Right lobe of liver (tissue), 6 donors: ENCODE measurements at regions of chr6 and their contacts with region 1.

Region 1: DNA sequence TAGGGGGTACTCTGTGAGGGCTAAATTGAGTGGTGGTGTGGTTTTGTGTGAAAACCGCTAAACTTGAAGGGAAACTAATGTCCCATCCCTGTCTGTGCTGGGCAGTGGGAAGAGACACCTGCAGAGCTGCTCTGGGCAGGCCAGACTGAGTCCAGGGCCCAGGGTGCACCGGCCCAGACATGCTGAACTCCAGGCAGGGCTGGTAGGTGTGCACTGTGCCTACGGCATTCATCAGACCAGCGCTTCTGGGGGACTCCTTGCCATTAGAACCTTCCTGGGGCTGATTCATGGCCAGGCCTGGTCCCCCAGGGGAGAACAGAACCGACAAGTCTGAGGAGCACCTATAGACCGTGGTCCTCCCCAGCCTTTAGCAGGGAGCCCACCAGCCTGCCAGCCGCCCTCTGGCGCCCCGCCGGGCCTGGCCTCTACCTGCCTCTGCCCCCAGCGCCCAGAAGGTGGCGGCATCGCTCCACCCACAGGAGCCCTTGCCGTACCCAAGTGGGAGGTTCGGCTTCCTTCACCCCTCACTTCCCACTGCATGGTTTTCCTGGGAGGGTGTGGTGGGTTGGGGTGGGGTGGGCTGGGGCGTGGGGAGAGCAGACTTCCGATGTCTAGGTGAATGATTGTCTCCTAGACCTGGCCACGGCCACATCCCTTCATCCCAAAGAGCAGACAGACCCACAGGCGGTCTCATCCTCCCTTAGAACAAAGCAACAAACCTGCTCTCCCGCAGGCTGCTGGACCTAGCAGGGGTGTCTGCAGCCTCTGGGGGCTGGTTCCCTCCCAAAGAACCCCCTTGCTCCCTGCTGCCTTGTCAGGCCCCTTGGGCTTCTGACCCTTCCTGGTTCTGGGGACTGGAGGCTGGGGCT is 15.5 kb downstream of the CCDC167 start:
- DNase-seq: peak; percentile 63 to 72 (median 67)
- ATAC-seq: peak; percentile 80 to 89 (median 85)
- H3K4me3 ChIP-seq: no peak overlapping the region
- H3K27ac ChIP-seq: no peak overlapping the region
- H3K4me1 ChIP-seq: no peaks in the 10 kb centered on the region
- H3K27me3 ChIP-seq: no peaks in the 10 kb centered on the region
- CTCF ChIP-seq: peak; percentile 69 to 85 (median 77)
- POLR2A ChIP-seq: no peak

Region 2: DNA sequence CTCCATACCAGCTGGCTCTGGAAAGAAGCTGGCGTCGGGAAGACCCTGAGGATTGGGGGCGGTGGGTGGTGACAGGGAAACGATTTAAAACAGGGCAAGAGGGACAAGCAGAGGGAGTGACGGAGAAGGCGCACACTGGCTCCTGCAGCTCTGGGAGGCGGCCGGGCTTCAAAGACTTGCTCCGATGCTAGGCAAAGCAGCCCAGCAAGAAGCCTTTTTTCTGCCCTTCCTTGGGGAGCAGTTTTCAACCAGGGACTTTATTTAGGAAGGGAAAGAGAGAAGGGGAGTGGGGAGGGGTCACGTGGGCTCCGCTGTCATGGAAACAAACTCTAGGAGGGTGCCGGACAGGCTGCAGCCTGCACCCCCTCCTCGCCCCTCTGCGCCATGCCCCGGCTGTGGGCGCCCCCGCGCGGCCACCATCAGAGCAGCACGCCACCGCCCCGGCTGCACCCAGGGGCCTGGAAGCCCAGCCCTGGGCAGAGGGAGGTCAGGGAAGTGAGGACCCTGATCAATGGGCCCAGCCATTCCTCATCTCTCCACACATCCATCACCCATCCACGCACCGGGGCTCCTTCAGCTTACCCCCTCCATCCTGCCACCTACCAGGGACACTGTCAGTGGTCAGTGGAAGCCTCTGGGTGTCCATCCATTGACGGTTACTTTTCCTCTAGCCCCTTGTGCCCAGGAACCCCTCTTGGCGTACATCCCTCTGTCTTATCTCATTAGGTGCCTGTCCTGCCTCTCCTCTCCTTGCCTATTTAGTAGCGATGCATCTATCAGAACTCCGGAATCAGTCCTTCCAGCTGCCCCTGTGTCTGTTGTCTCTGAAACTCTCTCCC is 82.2 kb after region 1 on chr6:
- intact Hi-C with region 1: loop called in 1 of 2 experiments (anchors 5 kb)
- DNase-seq: peak; percentile 53 to 64 (median 61)
- ATAC-seq: peak; percentile 89 to 94 (median 90)
- H3K4me3 ChIP-seq: no peak overlapping the region
- H3K27ac ChIP-seq: no peak overlapping the region
- H3K4me1 ChIP-seq: peaks cover 0 to 8% (median 0%) of the 10 kb centered on the region in 4 donors
- H3K27me3 ChIP-seq: peaks cover 0 to 4% of the 10 kb centered on the region in 2 donors
- CTCF ChIP-seq: peak; percentile 75 to 93 (median 92)
- POLR2A ChIP-seq: no peak

Region 3: GRCh38 chr6:37679539-37680476 is 195.7 kb after region 1 on chr6:
- intact Hi-C with region 1: loop called in 1 of 2 experiments (anchors 10 kb)
- DNase-seq: no peak
- ATAC-seq: no peak
- H3K4me3 ChIP-seq: no peak overlapping the region
- H3K27ac ChIP-seq: no peak overlapping the region
- H3K4me1 ChIP-seq: no peaks in the 10 kb centered on the region
- H3K27me3 ChIP-seq: no peaks in the 10 kb centered on the region
- CTCF ChIP-seq: no peak
- POLR2A ChIP-seq: no peak

Region 4: DNA sequence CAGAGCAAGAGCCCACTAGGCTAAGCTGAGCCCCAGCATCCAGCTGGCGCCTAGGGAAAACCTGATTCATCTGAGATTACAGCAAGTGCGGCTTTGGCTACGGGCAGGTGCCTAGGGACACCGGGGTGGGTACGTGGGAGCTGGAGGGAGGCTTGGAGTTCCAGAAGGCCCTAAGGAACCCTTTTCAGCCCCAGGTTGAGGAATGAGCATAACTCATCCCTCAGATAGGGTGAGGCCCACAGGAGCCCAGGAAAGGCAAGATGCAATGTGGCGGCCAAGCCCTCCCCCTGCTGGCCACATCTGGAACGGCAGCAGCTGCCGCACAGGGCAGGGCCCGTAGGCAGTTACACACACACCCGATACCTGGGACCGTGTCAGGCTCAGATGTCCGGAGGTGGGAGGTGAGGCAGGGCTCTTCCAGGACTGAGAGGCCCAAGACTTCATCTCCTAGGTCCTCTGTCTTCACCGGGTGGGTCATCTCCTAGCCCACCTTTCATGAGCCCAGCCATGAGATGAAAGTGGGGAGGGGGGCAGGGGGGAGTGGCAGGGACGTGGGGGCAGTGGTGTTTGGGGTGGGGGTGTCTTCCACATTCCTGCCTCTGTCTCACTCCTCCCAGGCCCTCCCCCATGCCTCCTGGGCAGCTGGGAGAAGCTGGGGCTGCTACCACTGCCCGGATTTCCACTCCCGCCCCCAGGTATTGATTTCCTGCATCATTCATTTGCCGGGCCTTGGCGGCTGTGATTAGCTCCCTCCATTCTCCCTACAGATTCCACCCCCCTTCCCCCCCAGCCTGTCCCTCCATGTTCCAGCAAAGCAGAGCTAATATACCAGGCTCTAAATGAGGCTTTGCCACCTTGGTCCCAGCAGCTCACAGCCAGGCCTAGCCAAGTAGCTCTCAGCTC is 208.0 kb after region 1 on chr6:
- intact Hi-C with region 1: loop called (anchors 10 kb)
- DNase-seq: peak; percentile 68 to 74 (median 72)
- ATAC-seq: peak; percentile 88 to 93 (median 91)
- H3K4me3 ChIP-seq: no peak overlapping the region
- H3K27ac ChIP-seq: no peak overlapping the region
- H3K4me1 ChIP-seq: peaks cover 0 to 8% (median 0%) of the 10 kb centered on the region in 4 donors
- H3K27me3 ChIP-seq: peaks cover 0 to 13% of the 10 kb centered on the region in 2 donors
- CTCF ChIP-seq: peak; percentile 95 to 98 (median 96)
- POLR2A ChIP-seq: no peak